H1 (cell line): ENCODE measurements at regions of chr2 and their contacts with region 1.

Region 1: DNA sequence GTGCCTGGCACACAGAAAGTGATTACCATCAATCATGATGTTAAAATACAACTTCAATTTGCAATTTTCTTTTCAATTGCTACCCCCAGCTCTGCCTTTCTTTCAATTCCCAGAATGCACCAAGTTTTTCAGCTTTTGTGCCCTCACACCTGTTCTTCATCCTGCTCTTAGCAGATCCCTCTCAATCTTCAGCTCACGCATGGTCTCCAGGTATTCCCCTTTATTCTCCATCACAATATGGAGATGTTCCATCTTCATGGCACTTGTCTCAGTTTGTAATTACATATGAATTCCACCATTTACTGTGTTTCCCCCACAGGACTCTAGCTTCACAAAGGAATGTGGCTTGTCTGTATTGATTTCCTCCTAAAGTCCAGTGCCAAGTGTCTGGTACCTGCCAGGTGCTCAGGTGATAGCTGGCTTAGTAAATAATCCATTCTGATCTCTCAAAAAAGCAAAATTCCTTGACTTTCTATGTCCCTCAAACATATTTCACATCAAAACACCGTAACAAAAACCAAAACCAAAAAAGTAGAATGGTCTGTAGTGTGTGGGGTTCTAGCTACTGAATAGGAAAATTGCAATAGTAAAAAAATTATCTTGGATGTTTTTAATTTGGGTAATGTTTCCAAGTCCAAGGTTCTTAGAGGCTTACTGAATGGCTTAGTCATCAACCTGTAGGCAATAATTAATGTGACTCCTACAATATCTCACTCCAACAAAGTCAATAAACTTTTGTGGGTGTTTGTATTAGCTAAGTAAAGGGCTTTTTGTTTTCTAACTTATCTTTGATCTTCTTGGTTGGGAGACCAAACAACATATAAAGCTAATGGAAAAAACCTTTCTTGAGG is 2.9 kb upstream of the INSIG2 start:
- DNase-seq: no peak
- H3K4me3 ChIP-seq: no peak overlapping the region
- H3K27ac ChIP-seq: no peak overlapping the region
- H3K4me1 ChIP-seq: peaks cover 0 to 5% (median 2%) of the 10 kb centered on the region in 4 experiments; a peak in 3 of 7 replicates
- H3K27me3 ChIP-seq: no peaks in the 10 kb centered on the region
- CTCF ChIP-seq: no peak
- EP300 ChIP-seq: no peak
- POLR2A ChIP-seq: no peak
- RAD21 ChIP-seq: no peak

Region 2: DNA sequence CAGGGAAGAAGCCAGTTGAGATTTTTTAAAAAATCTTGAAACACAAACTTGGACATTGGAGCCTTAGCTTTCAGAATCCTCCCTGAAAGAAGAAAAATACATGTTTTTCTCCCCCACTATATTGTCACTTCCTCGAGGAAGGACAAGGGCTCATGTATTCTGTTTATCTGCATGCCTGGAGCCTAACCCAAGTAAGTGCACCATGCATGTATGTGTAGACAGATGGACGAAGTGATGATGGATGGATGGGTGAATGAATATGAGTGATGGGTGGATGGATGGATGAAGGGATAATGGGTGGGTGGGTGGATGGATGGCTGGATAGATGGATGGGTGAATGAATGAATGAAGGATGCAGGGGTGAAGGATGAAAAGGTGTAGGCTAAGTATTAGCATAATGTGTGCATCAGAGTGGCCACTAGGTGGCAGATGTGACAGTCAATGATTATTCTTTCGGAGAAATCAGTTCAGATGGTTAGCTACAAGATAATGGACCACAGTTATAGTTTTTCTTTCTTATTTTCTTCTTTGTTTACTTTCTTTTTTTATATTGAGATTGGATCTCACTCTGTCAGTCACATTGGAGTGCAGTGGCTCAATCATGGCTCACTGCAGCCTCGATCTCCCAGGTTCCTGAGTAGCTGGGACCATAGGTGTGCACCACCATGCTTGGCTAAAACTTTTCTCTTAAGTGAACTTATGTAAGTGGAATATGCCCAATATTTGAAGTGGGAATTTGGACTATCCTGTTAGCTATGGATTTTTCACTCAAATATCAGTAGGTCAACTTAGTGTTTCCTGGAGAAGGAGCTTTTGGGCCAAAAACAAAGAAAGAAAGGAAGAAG is 53.0 kb before region 1 on chr2:
- CTCF ChIA-PET with region 1: interaction called, 10 read pairs
- POLR2A ChIA-PET with region 1: no interaction called
- DNase-seq: peak in 1 of 2 experiments; percentile 52
- H3K4me3 ChIP-seq: no peak overlapping the region
- H3K27ac ChIP-seq: no peak overlapping the region
- H3K4me1 ChIP-seq: peaks cover 0 to 8% (median 1%) of the 10 kb centered on the region in 4 experiments; a peak in 2 of 7 replicates
- H3K27me3 ChIP-seq: peaks cover 0 to 1% (median 0%) of the 10 kb centered on the region in 4 experiments; a peak in 1 of 7 replicates
- CTCF ChIP-seq: peak in 2 of 3 experiments; percentile 55 to 83; a peak in 3 of 4 replicates
- EP300 ChIP-seq: no peak
- POLR2A ChIP-seq: no peak
- RAD21 ChIP-seq: peak; percentile 43 to 55